BJ (cell line): ENCODE measurements at regions of chr15 and their contacts with region 1.

Region 1: GRCh38 chr15:58898150-58898680 is 35.3 kb downstream of the SLTM start:
- DNase-seq: no peak
- H3K4me3 ChIP-seq: no peak overlapping the region
- H3K27me3 ChIP-seq: no peaks in the 10 kb centered on the region
- CTCF ChIP-seq: no peak

Region 2: DNA sequence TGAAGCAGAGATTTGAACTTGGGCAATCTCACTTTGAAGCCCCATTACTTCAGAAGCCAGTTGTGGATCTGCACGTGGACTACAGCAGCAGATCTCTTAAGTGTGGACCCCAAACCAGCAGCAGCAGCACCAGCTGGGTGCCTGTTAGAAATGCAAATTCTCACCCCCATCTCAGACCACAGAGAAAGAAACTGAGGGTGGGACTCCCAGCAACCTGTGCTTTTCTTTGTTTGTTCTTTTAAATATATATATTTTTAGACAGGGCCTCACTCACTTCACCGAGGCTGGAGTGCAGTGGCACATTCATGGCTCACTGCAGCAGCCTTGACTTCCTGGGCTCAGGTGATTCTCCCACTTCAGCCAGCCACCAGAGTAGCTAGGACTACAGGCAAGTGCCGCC is 17.9 kb before region 1 on chr15:
- CTCF ChIA-PET with region 1: interaction called, 3 read pairs
- POLR2A ChIA-PET with region 1: interaction called, 14 read pairs
- DNase-seq: no peak
- H3K4me3 ChIP-seq: no peak overlapping the region
- H3K27me3 ChIP-seq: no peaks in the 10 kb centered on the region
- CTCF ChIP-seq: no peak

Region 3: GRCh38 chr15:58910456-58910855 is 12.2 kb after region 1 on chr15:
- CTCF ChIA-PET with region 1: no interaction called
- POLR2A ChIA-PET with region 1: no interaction called
- DNase-seq: no peak
- H3K4me3 ChIP-seq: no peak overlapping the region
- H3K27me3 ChIP-seq: no peaks in the 10 kb centered on the region
- CTCF ChIP-seq: no peak